Panc1 (cell line): ENCODE measurements at regions of chr1 and their contacts with region 1.

Region 1: DNA sequence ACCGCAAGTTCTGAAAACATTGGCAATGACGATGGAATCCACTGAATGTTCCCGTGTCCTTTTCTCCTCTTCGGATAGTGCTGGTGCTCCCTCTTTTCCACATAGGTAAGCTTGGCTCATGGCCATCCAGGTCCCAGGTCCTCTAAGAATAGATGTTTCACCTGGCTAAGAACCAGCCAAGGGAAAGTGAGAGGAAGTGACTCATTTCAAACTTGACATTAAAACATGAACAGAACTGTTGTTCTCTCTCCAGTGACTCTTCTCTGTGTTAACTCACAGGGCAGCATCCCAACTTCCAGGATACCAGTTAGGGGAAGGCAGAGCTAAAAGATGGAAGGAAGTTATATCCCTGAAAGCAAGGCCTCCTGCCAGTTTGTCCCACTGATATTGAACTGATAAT is 493.8 kb upstream of the CHRM3 start:
- DNase-seq: peak; percentile 82
- ATAC-seq: peak; percentile 84; the same call in 1 of the 2 replicates
- H3K4me3 ChIP-seq: no peak overlapping the region
- H3K27ac ChIP-seq: no peak overlapping the region; the same call in 1 of the 2 replicates
- H3K4me1 ChIP-seq: peaks cover 3% of the 10 kb centered on the region
- H3K27me3 ChIP-seq: no peaks in the 10 kb centered on the region
- CTCF ChIP-seq: no peak

Region 2: DNA sequence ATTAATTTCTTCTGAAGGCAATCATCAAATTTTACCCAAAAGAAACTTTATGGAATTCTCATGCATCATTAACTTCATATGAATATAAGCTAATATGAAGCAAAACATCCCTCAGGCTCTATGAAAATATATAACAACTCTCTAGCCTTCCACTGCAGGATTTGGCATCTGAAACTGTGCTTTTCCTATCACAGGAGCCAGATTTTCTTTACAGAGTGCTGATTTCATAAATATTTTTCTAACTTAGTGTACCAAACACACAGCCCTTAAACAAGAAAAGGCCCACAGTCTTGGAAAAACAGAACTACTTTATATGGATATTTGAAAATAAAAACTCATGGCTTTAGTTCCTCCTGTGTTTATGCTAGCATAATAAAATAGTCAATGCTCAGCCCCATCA is 65.7 kb before region 1 on chr1:
- CTCF ChIA-PET with region 1: no interaction called
- POLR2A ChIA-PET with region 1: no interaction called
- in situ Hi-C with region 1: no loop called
- intact Hi-C with region 1: no loop called
- DNase-seq: no peak
- ATAC-seq: no peak
- H3K4me3 ChIP-seq: no peak overlapping the region
- H3K27ac ChIP-seq: no peak overlapping the region
- H3K4me1 ChIP-seq: no peaks in the 10 kb centered on the region
- H3K27me3 ChIP-seq: no peaks in the 10 kb centered on the region
- CTCF ChIP-seq: no peak

Region 3: GRCh38 chr1:239719642-239720258 is 827.1 kb after region 1 on chr1:
- CTCF ChIA-PET with region 1: no interaction called
- POLR2A ChIA-PET with region 1: interaction called, 11 read pairs
- in situ Hi-C with region 1: no loop called
- intact Hi-C with region 1: no loop called
- DNase-seq: no peak
- ATAC-seq: no peak
- H3K4me3 ChIP-seq: no peak overlapping the region
- H3K27ac ChIP-seq: no peak overlapping the region
- H3K4me1 ChIP-seq: no peaks in the 10 kb centered on the region
- H3K27me3 ChIP-seq: no peaks in the 10 kb centered on the region
- CTCF ChIP-seq: no peak